PC-9 (cell line): ENCODE measurements at regions of chr17 and their contacts with region 1.

Region 1: DNA sequence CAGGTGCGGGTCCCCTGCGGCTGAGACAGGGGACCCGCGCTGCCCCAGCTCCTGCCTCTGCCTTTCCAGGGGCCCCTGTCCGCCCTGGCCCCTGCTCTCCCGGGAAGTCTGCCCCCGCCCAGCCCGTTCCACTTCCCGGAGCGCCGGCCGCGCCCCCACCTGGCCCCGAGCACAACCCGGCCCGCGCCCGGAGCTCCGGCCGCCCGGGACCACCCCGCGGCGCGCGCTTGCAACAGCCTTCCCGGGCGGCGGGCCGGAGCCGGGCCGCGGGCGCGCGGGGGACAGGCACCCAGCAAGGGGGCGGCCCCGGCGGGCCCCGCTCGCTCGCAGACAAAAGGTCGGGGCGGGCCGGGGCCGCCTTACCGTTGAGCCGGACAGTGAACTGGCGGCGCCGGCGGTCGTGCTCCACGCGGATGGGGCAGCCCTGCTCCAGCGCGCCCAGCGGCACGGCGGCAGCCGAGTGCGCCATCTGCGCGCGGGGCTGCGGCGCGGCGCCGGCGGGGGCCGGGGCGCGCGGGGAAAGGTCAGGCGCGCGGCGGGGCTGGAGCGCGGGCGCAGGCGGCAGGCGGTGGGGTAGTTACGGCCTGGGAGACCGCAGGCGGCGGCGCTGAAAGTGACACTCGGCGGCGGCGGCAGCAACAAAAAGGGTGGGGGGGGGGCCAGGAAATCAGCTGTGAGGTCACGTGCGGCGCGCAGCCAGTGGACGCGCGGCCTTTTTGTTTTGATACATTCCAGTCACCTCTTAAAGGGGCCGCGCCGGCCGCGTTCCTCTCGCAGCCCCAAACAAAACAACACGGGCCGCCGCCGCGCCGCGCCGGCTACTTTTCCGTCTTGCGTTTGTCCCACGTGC is at the start of gene NATD1:
- DNase-seq: peak; percentile 58 to 66
- H3K4me3 ChIP-seq: peak within 1 kb of the TSS; percentile 78
- H3K27ac ChIP-seq: no peak within 1 kb of the TSS
- H3K4me1 ChIP-seq: peaks cover 20% of the 10 kb centered on the region
- H3K27me3 ChIP-seq: 0 out of 2 replicates have a peak, but pooled peaks cover 4% of the 10 kb centered on the region
- CTCF ChIP-seq: no peak
- total RNA-seq, gene NATD1: 5.3 and 5.4 TPM in 2 replicates

Region 2: DNA sequence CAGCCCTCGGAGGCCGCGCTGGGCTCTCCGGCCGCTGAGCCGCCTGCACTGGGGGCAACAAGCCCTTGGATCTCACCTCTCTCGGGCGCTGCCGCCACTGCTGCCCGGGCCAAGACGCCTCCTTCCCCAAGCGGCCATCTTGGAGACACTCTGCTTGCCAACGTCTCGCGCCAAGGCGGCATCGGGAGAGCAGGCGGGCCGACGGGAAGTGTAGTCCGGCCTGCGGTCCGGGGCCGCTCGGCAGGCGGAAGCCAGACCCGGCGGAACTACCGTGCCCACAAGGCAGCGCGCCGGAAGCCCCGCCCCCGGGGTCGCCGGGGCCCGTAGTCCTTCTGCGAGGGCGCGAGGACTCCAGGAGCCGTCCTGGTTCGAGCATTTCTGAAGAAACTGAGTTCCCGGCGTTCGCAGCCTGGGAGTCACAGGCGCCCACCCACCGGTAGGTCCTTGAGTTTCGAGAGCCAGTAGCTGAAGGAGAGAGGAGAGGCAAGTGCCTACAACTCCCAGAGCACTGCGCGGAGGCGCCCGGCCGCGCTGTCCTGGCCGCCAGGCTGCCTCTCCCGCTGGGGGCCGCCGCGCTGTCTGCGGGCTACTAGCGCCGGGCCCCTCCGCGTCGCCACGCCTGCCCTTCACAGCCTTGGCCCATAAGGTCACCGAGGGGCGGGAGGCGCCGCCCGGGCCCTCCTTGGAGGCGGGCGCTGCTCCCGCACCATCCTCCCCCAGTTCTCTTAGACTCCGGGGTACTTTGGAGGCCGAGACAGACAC is 38.8 kb before region 1 on chr17 and contains the start of gene TMEM11:
- CTCF ChIA-PET with region 1: no interaction called
- POLR2A ChIA-PET with region 1: no interaction called
- intact Hi-C with region 1: loop called (anchors 1 kb)
- DNase-seq: peak; percentile 86 to 97
- H3K4me3 ChIP-seq: peak within 1 kb of the TSS; percentile 97
- H3K27ac ChIP-seq: peak within 1 kb of the TSS; percentile 81
- H3K4me1 ChIP-seq: peaks cover 32% of the 10 kb centered on the region
- H3K27me3 ChIP-seq: no peaks in the 10 kb centered on the region
- CTCF ChIP-seq: no peak
- total RNA-seq, gene TMEM11: 34.2 and 37.6 TPM in 2 replicates

Region 3: DNA sequence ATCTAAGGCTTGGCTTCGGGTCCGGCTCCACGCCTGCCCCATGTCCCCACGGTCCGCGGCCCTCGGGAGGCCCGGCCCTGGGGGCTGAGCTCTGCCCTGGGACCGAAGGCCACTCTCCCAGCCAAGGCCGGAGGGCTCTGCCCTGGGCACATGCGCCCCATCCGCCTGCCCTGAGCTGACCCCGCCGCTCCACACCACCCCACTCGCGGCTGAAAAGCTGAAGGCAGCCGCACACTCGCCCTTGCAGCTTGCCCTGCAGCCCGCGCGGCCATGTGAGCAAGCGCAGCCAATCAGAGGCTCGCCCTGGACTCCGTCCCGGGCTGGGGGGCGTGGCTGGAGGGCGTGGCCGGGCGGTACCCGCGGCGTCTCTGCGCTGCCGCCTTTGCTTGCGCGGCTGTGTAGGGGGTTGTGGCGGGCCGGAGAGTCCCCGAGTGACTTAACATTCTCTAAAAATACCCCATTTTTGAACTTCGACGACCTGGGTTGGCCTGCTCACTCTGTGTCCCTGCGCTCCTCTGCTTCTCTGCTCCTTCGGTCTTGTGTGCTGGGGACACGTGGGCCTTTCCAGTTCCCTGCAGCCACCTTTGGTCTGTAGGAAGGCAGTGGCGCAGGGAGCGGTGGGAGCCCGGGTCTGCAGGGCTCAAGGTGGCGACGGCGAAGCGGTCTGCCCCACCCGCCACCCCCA is 22.7 kb after region 1 on chr17:
- CTCF ChIA-PET with region 1: interaction called, 14 read pairs
- POLR2A ChIA-PET with region 1: no interaction called
- intact Hi-C with region 1: no loop called
- DNase-seq: peak; percentile 62 to 91
- H3K4me3 ChIP-seq: peak overlapping the region; percentile 70
- H3K27ac ChIP-seq: no peak overlapping the region
- H3K4me1 ChIP-seq: peaks cover 4% of the 10 kb centered on the region; the same call in 1 of the 2 replicates
- H3K27me3 ChIP-seq: no peaks in the 10 kb centered on the region
- CTCF ChIP-seq: no peak

Region 4: GRCh38 chr17:21284319-21285163 is 31.5 kb after region 1 on chr17 and contains the start of gene MAP2K3:
- CTCF ChIA-PET with region 1: no interaction called
- POLR2A ChIA-PET with region 1: no interaction called
- intact Hi-C with region 1: loop called (anchors 5 kb)
- DNase-seq: peak; percentile 96 to 100
- H3K4me3 ChIP-seq: peak within 1 kb of the TSS; percentile 76
- H3K27ac ChIP-seq: peak within 1 kb of the TSS; percentile 96
- H3K4me1 ChIP-seq: peaks cover 46% of the 10 kb centered on the region
- H3K27me3 ChIP-seq: no peaks in the 10 kb centered on the region
- CTCF ChIP-seq: no peak
- total RNA-seq, gene MAP2K3: 89.2 and 98.1 TPM in 2 replicates

Region 5: GRCh38 chr17:21397341-21398190 is 144.5 kb after region 1 on chr17:
- CTCF ChIA-PET with region 1: no interaction called
- POLR2A ChIA-PET with region 1: no interaction called
- intact Hi-C with region 1: no loop called
- DNase-seq: no peak
- H3K4me3 ChIP-seq: no peak overlapping the region
- H3K27ac ChIP-seq: no peak overlapping the region
- H3K4me1 ChIP-seq: peaks cover 19% of the 10 kb centered on the region
- H3K27me3 ChIP-seq: no peaks in the 10 kb centered on the region
- CTCF ChIP-seq: no peak